Astrocyte of the cerebellum (primary cell): ENCODE measurements at regions of chr11 and their contacts with region 1.

Region 1: GRCh38 chr11:47184711-47185304 is 1.4 kb downstream of the PACSIN3 start:
- DNase-seq: no peak
- H3K4me3 ChIP-seq: peak overlapping the region; percentile 62
- CTCF ChIP-seq: no peak

Region 2: GRCh38 chr11:47061429-47062178 is 123.2 kb before region 1 on chr11:
- in situ Hi-C with region 1: no loop called
- DNase-seq: no peak
- H3K4me3 ChIP-seq: no peak overlapping the region
- CTCF ChIP-seq: no peak

Region 3: GRCh38 chr11:47152953-47153950 is 31.6 kb before region 1 on chr11:
- in situ Hi-C with region 1: no loop called
- DNase-seq: peak; percentile 67
- H3K4me3 ChIP-seq: no peak overlapping the region
- CTCF ChIP-seq: peak; percentile 99

Region 4: DNA sequence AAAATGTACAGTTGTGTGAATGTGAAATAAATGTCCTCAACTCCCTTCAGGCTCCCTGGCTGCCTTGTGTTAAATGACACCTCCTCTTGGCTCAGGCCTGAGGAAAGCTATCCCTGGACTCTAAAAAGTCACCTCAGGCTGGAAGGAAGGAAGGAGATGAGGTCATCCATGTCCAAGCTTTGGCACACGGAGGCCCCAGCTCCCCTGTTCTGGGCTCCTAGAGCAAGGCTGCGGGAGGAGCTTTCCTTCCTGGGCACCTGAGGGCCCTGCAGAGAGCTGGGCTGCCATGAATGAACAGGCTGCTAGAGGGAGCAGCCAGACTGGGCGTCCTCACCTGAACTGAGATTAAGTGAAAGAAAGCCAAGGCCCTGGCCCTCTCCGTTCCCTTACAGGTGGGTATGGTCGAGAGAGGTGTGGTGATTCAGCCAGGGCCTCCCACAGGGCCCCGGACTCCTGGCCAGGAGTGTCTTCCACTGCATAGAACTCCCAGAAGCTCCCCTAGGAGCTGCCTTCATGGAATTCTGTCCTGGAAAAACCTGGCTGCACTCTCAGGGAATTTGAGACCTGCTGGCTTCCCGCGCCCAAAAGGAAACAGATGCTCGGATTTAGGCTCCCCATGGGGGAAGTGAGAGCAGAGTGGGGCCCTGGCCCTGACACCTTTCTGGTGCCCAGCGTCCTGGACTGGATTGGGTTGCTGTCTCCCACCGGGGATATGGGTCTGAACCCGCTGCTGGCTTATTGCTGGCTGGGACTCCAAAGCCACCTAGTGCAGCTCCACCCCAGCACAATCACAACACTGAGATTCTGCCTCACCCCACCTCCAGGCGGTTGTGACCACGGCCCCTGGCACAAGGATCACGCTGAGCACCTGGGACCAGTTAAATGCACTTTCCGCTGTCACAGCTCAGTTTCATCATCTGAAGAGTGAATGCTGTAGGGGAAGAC is 145.5 kb after region 1 on chr11:
- in situ Hi-C with region 1: loop called (anchors 5 kb)
- DNase-seq: no peak
- H3K4me3 ChIP-seq: no peak overlapping the region
- CTCF ChIP-seq: no peak